ENCODE measurements at regions of chr13 and their contacts with region 1.

Region 1: DNA sequence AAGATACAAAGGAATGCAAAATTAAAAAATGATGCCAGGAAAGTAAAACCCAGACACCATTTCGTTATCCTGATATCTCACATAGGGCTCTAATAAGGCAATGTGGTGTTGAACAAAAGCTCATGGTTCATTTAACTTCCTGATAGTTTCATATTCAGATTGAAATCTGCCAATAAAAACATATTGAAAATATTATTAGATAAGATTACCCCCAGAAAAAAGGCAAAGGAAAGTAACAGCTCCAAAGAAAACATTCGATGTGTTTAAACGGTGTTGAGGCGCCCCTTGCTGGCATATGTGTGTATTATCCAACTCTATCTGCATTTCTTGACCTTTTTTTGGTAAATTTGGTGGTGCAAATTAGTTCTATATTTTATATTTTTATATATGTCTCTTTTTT is 75.9 kb downstream of the ESD start:
- DNase-seq: peak; percentile 15
- ATAC-seq: no peak
- H3K4me3 ChIP-seq: no peak overlapping the region
- H3K27ac ChIP-seq: no peak overlapping the region
- H3K4me1 ChIP-seq: no peaks in the 10 kb centered on the region
- H3K27me3 ChIP-seq: no peaks in the 10 kb centered on the region
- CTCF ChIP-seq: peak; percentile 36 to 68 (median 55); a peak in 4 of 6 replicates
- POLR2A ChIP-seq: no peak
- RAD21 ChIP-seq: peak; percentile 74

Region 2: GRCh38 chr13:46492946-46493345 is 228.1 kb before region 1 on chr13:
- CTCF ChIA-PET with region 1: interaction called, 17 read pairs
- POLR2A ChIA-PET with region 1: no interaction called
- RAD21 ChIA-PET with region 1: interaction called, 4 to 5 read pairs
- intact Hi-C with region 1: loop called (anchors 1 kb)
- DNase-seq: peak; percentile 32
- ATAC-seq: peak; percentile 47
- H3K4me3 ChIP-seq: no peak overlapping the region
- H3K27ac ChIP-seq: no peak overlapping the region
- H3K4me1 ChIP-seq: no peaks in the 10 kb centered on the region; a peak in 1 of 4 replicates
- H3K27me3 ChIP-seq: no peaks in the 10 kb centered on the region
- CTCF ChIP-seq: peak; percentile 46 to 69 (median 46); a peak in 5 of 6 replicates
- POLR2A ChIP-seq: no peak
- RAD21 ChIP-seq: peak; percentile 77

Region 3: GRCh38 chr13:46553886-46554858 is 166.9 kb before region 1 on chr13:
- CTCF ChIA-PET with region 1: interaction called, 25 read pairs
- POLR2A ChIA-PET with region 1: no interaction called
- RAD21 ChIA-PET with region 1: interaction called in 1 of 2 experiments, 3 read pairs
- intact Hi-C with region 1: loop called (anchors 1 kb)
- DNase-seq: peak; percentile 55
- ATAC-seq: peak; percentile 64
- H3K4me3 ChIP-seq: peak overlapping the region; percentile 88
- H3K27ac ChIP-seq: peak overlapping the region; percentile 76
- H3K4me1 ChIP-seq: peaks cover 10 to 23% of the 10 kb centered on the region in 2 experiments; a peak in 3 of 4 replicates
- H3K27me3 ChIP-seq: no peaks in the 10 kb centered on the region
- CTCF ChIP-seq: no peak; a peak in 1 of 6 replicates
- POLR2A ChIP-seq: peak; percentile 50
- RAD21 ChIP-seq: no peak

Region 4: GRCh38 chr13:46603165-46603603 is 117.9 kb before region 1 on chr13:
- CTCF ChIA-PET with region 1: interaction called, 4 read pairs
- POLR2A ChIA-PET with region 1: no interaction called
- RAD21 ChIA-PET with region 1: no interaction called
- intact Hi-C with region 1: loop called (anchors 5 kb)
- DNase-seq: no peak
- ATAC-seq: peak; percentile 65
- H3K4me3 ChIP-seq: no peak overlapping the region
- H3K27ac ChIP-seq: no peak overlapping the region
- H3K4me1 ChIP-seq: peaks cover 69 to 84% of the 10 kb centered on the region in 2 experiments
- H3K27me3 ChIP-seq: no peaks in the 10 kb centered on the region
- CTCF ChIP-seq: peak; percentile 9 to 66 (median 59); a peak in 4 of 6 replicates
- POLR2A ChIP-seq: no peak
- RAD21 ChIP-seq: peak; percentile 27; the same call in 1 of the 2 replicates

Measured in HCT116 (cell line).